Right cardiac atrium (tissue), 5 donors: ENCODE measurements at regions of chr7 and their contacts with region 1.

Region 1: GRCh38 chr7:136868496-136869000 is at the start of gene CHRM2:
- DNase-seq: peak; percentile 24 to 65 (median 57)
- ATAC-seq: peak; percentile 37 to 43
- H3K4me3 ChIP-seq: peak within 1 kb of the TSS; percentile 66
- H3K27ac ChIP-seq: peak within 1 kb of the TSS; percentile 73
- H3K4me1 ChIP-seq: no peaks in the 10 kb centered on the region
- H3K27me3 ChIP-seq: no peaks in the 10 kb centered on the region
- total RNA-seq, gene CHRM2: 50.3 to 140 (median 104) TPM

Region 2: GRCh38 chr7:136911344-136911743 is 42.8 kb after region 1 on chr7:
- intact Hi-C with region 1: no loop called
- DNase-seq: no peak
- ATAC-seq: peak; percentile 31 to 47
- H3K4me3 ChIP-seq: no peak overlapping the region
- H3K27ac ChIP-seq: no peak overlapping the region
- H3K4me1 ChIP-seq: no peaks in the 10 kb centered on the region
- H3K27me3 ChIP-seq: no peaks in the 10 kb centered on the region

Region 3: GRCh38 chr7:137091396-137091795 is 222.8 kb after region 1 on chr7:
- intact Hi-C with region 1: loop called in 2 of 4 experiments (anchors 10 kb)
- DNase-seq: no peak
- ATAC-seq: peak; percentile 73 to 84
- H3K4me3 ChIP-seq: no peak overlapping the region
- H3K27ac ChIP-seq: no peak overlapping the region
- H3K4me1 ChIP-seq: no peaks in the 10 kb centered on the region
- H3K27me3 ChIP-seq: no peaks in the 10 kb centered on the region